ENCODE measurements at regions of chr3 and their contacts with region 1.

Region 1: DNA sequence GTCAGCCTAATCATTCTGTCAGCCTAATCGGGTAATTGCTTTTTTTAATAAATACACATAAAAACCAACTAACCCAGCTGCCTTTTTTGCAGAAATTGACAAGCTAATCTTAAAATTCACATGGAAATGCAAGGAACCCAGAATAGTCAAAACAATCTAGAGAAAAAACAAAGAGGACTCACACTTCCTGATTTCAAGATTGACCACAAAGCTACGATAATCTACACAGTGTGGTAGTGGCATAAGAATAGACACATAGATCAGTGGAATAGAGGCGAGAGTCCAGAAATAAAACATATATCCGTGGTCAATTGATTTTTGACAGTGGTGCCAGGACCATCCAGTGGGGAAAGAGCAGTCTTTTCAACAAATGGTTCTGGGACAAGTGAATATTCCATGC is 2.4 kb upstream of the C3orf20 start:
- DNase-seq: no peak
- ATAC-seq: no peak
- H3K4me3 Mint-ChIP-seq: no peak overlapping the region
- H3K27ac Mint-ChIP-seq: no peak overlapping the region
- H3K4me1 Mint-ChIP-seq: no peaks in the 10 kb centered on the region
- H3K27me3 Mint-ChIP-seq: no peaks in the 10 kb centered on the region

Region 2: GRCh38 chr3:14371573-14372474 is 300.8 kb before region 1 on chr3:
- CTCF ChIA-PET with region 1: no interaction called
- POLR2A ChIA-PET with region 1: no interaction called
- DNase-seq: no peak
- ATAC-seq: no peak
- H3K4me3 Mint-ChIP-seq: no peak overlapping the region
- H3K27ac Mint-ChIP-seq: peak overlapping the region; percentile 11
- H3K4me1 Mint-ChIP-seq: peaks cover 10% of the 10 kb centered on the region
- H3K27me3 Mint-ChIP-seq: peaks cover 4% of the 10 kb centered on the region

Region 3: GRCh38 chr3:14651440-14652251 is 20.9 kb before region 1 on chr3 and contains the start of gene CCDC174:
- CTCF ChIA-PET with region 1: interaction called, 4 read pairs
- POLR2A ChIA-PET with region 1: interaction called, 16 read pairs
- DNase-seq: peak; percentile 97
- ATAC-seq: peak; percentile 97
- H3K4me3 Mint-ChIP-seq: peak within 1 kb of the TSS; percentile 98
- H3K27ac Mint-ChIP-seq: peak within 1 kb of the TSS; percentile 97
- H3K4me1 Mint-ChIP-seq: peaks cover 35% of the 10 kb centered on the region
- H3K27me3 Mint-ChIP-seq: no peaks in the 10 kb centered on the region
- total RNA-seq, gene CCDC174: 17.5 to 18.5 TPM

Region 4: DNA sequence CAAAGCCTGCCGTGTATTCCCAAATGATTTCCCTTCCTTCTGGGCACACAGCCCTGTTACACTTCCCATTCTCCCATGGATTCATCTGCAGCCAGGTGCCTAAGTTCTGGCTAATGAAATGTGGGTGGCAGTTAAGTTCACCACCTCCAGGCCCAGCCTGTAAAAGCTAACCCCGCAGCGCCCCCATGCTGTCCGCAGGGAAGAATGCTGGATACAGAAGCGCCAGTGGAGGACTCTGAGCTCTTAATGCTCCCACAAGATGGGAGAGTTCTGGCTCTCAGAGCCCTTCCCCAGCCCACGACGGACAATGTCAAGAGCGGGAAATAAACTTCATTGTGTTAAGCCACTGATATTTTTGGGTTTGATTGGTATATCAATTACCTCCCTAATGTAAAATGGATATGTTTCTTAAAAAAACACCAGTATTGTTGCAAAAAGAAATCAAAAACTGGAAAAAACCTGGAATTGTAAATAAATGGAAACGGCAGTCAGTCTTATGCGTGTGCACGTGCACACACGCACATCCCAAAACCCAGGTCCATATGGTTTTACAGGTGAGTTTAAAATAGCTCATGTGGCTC is 108.4 kb after region 1 on chr3:
- CTCF ChIA-PET with region 1: interaction called, 16 read pairs
- POLR2A ChIA-PET with region 1: no interaction called
- DNase-seq: peak; percentile 54
- ATAC-seq: peak; percentile 58
- H3K4me3 Mint-ChIP-seq: no peak overlapping the region
- H3K27ac Mint-ChIP-seq: no peak overlapping the region
- H3K4me1 Mint-ChIP-seq: no peaks in the 10 kb centered on the region
- H3K27me3 Mint-ChIP-seq: peaks cover 10% of the 10 kb centered on the region

Region 5: DNA sequence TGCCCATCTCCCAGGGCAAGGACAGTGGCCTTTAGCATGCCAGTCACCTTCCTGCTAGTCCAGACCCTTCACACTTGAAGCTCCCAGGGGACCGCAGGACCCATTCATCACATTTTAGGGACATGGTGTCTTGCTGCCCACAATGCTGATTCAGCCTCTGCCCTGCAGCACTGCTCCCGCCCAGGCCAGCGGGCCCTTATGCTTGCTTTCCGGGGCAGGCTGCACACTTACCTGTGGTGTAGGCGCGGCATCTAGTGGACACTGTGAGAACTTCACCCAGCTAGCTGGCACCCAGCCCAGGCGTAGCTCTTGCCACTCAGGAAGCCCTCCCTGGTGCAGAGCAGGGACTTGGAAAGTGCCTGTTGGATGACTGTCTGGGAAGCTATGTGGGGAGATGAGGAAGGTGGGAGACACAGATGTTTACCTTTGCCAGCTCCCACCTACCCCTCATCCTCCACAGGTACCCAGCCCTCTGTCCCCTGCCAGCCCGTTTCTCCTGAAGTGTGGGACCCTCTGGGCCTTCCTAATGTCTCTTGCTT is 248.6 kb after region 1 on chr3:
- CTCF ChIA-PET with region 1: interaction called, 12 read pairs
- POLR2A ChIA-PET with region 1: no interaction called
- DNase-seq: peak; percentile 87
- ATAC-seq: peak; percentile 92
- H3K4me3 Mint-ChIP-seq: no peak overlapping the region
- H3K27ac Mint-ChIP-seq: no peak overlapping the region
- H3K4me1 Mint-ChIP-seq: no peaks in the 10 kb centered on the region
- H3K27me3 Mint-ChIP-seq: peaks cover 7% of the 10 kb centered on the region